Activated T-helper 2 cell treated with anti-CD3 and anti-CD28 coated beads, Interferon-gamma antibody, Interleukin-2, Interleukin-4, amounts not matched to agents 10 μg/mL and 5 μg/mL and 100 μg/mL, durations not matched to agents 14 hours and 24 hours and 36 hours (primary cell): ENCODE measurements at regions of chr16 and their contacts with region 1.

Region 1: DNA sequence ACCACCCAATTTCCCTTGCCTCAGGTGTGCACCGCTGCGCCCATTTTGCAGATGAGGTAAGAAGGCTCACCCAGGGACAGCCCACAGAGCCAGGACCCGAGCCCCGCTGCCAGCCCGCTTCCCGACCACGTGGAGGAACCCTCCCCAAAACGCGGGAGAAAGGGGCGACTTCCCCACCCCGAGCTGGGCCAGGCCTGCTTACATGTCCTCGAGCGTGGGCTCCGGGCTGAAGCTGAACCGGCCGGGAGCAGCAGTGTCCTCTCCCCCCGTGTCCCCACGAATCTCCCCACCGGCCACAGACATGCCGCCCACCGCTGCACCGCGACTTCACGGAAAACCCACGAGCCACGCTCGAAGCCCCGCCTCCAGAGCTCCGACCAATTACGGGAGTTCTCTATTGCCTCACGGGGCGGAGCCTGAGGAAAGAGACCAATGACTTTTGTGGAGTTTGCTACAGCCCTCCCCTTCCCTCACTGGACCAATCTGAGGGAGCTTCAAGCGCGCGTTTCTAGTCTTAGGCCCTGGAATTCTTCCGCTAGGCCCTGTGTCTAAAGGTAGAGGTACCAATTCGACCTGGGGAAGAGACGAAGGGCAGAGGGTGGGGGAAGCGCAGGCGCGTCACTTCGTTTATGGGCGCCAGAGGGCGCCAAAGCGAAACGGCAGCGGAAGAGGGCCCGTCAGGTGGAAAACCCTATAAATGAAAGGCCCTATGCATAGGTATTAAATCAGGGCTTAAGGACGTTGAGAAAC is at the start of gene DCTPP1:
- DNase-seq: peak; percentile 96
- H3K4me3 Mint-ChIP-seq: no peak within 1 kb of the TSS
- H3K27ac Mint-ChIP-seq: no peak within 1 kb of the TSS
- H3K4me1 Mint-ChIP-seq: peaks cover 20% of the 10 kb centered on the region
- H3K27me3 Mint-ChIP-seq: no peaks in the 10 kb centered on the region
- total RNA-seq, gene DCTPP1: 127 and 128 TPM in 2 replicates

Region 2: DNA sequence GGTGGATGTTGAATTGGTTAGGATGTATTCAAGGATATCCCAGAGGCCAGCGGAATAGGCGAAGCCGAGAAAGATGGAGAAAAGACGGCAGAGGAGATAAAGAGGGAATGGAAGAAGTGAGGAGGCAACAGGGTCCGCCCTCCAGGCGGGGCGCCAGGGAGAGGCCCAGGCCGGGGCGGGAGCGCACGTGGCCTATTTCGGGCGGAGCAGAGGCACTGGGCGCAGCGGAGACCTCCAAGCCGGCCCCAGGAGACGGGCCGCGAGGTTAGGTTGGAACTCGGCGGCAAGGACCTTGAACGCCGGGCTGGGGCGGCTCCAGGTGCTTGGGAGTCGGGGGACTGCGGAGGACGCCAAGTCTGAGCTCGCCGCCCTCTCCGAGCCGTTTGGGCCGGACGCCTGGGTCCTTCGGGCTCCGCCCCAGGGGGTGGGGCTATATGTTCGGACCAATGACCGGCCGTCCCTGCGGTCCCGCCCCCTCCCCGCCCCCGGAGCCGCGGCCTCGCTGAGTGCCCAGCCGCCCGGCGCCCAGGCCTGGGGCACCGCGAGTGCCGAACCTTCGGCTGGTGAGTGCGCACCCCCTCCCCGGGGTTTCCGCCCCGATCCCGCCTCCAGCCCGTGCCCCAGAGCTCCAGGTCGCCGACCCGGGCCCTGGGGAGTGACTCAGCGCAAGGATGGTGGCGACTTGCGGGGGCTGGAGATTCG is 22.6 kb before region 1 on chr16 and contains the start of gene ZNF771:
- intact Hi-C with region 1: loop called (anchors 2 kb)
- DNase-seq: peak; percentile 82
- H3K4me3 Mint-ChIP-seq: peak within 1 kb of the TSS; percentile 95
- H3K27ac Mint-ChIP-seq: peak within 1 kb of the TSS; percentile 97
- H3K4me1 Mint-ChIP-seq: peaks cover 28% of the 10 kb centered on the region
- H3K27me3 Mint-ChIP-seq: no peaks in the 10 kb centered on the region
- total RNA-seq, gene ZNF771: 8.3 and 9.3 TPM in 2 replicates

Region 3: GRCh38 chr16:30458561-30459394 is 28.9 kb after region 1 on chr16:
- intact Hi-C with region 1: loop called (anchors 2 kb)
- DNase-seq: peak; percentile 91
- H3K4me3 Mint-ChIP-seq: peak overlapping the region; percentile 50
- H3K27ac Mint-ChIP-seq: peak overlapping the region; percentile 96
- H3K4me1 Mint-ChIP-seq: peaks cover 64% of the 10 kb centered on the region
- H3K27me3 Mint-ChIP-seq: no peaks in the 10 kb centered on the region

Region 4: DNA sequence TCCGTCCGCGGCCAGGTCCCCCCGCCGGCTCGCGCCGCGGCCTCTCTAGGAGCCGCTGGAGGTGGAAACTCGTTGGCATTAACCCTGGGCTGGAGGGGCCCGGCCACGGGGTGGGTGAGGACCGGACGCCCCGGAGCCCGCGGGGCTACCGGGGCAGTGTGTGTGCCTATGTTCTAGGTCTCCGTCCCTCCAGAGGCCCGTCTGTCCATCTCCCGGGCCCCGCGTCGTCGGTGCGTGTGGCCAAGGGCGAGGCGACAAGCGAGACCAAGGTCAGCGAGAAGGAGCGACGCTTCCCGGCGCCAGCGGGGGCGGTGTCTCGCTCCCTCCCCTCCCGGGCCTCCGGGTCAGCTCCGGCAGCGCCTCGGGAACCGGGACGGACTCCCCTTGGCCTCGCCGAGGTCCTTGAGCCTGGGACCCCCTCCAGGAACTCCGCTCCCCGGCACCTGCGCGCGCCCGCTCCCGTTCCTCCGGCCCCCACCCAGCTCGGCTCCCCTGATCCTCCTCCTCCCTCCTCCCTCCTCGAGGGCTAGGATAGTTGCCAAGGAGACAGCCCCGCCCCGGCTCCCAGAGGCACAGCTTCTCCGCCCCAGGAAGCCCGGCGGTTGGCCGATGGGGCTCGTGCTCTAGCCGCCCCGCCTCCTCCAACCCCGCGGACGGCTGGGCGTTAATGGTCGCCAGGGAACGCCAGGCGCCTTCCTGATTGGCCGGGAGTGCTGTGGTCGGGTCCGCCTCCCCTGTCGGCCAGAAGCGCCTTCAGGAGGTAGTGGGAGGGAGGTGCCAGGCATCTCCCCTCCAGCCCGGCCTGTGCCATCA is 97.2 kb after region 1 on chr16:
- intact Hi-C with region 1: loop called (anchors 5 kb)
- DNase-seq: peak; percentile 94
- H3K4me3 Mint-ChIP-seq: peak overlapping the region; percentile 84
- H3K27ac Mint-ChIP-seq: peak overlapping the region; percentile 67
- H3K4me1 Mint-ChIP-seq: peaks cover 23% of the 10 kb centered on the region
- H3K27me3 Mint-ChIP-seq: no peaks in the 10 kb centered on the region

Region 5: GRCh38 chr16:30609926-30610839 is 180.3 kb after region 1 on chr16 and contains the start of gene ZNF689:
- intact Hi-C with region 1: loop called (anchors 5 kb)
- DNase-seq: peak; percentile 93
- H3K4me3 Mint-ChIP-seq: peak within 1 kb of the TSS; percentile 87
- H3K27ac Mint-ChIP-seq: peak within 1 kb of the TSS; percentile 96
- H3K4me1 Mint-ChIP-seq: peaks cover 16% of the 10 kb centered on the region
- H3K27me3 Mint-ChIP-seq: no peaks in the 10 kb centered on the region
- total RNA-seq, gene ZNF689: 11.4 and 12.4 TPM in 2 replicates

Region 6: GRCh38 chr16:30650369-30651123 is 220.7 kb after region 1 on chr16 and contains the start of gene PRR14:
- intact Hi-C with region 1: loop called (anchors 1 kb)
- DNase-seq: peak; percentile 99
- H3K4me3 Mint-ChIP-seq: peak within 1 kb of the TSS; percentile 98
- H3K27ac Mint-ChIP-seq: peak within 1 kb of the TSS; percentile 97
- H3K4me1 Mint-ChIP-seq: peaks cover 13% of the 10 kb centered on the region
- H3K27me3 Mint-ChIP-seq: no peaks in the 10 kb centered on the region
- total RNA-seq, gene PRR14: 84.0 and 90.5 TPM in 2 replicates